ENCODE measurements at regions of chr7 and their contacts with region 1.

Region 1: DNA sequence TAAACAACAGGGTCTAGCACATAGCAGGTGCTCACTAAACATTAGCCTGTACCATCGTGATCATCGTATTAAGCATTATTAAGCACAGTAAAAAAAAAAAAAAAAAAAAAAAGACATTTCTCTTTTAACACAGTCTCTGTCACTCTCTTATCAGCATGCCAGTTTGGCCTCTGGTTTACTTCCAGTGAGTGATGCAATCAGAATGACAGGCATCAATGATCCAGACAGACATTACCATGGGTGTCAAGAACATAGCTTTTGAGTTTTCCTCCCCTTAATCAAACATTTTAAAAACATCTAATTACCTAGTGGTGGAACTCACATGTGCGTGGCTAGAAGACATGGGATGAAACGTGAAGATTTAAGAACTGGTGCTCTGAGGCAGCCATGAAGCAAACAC is 115.8 kb downstream of the CTTNBP2 start:
- DNase-seq: no peak
- CTCF ChIP-seq: no peak

Region 2: GRCh38 chr7:117769085-117769484 is 11.6 kb after region 1 on chr7:
- CTCF ChIA-PET with region 1: interaction called, 10 read pairs
- POLR2A ChIA-PET with region 1: no interaction called
- DNase-seq: no peak
- CTCF ChIP-seq: no peak